ENCODE measurements at regions of chr5 and their contacts with region 1.

Region 1: DNA sequence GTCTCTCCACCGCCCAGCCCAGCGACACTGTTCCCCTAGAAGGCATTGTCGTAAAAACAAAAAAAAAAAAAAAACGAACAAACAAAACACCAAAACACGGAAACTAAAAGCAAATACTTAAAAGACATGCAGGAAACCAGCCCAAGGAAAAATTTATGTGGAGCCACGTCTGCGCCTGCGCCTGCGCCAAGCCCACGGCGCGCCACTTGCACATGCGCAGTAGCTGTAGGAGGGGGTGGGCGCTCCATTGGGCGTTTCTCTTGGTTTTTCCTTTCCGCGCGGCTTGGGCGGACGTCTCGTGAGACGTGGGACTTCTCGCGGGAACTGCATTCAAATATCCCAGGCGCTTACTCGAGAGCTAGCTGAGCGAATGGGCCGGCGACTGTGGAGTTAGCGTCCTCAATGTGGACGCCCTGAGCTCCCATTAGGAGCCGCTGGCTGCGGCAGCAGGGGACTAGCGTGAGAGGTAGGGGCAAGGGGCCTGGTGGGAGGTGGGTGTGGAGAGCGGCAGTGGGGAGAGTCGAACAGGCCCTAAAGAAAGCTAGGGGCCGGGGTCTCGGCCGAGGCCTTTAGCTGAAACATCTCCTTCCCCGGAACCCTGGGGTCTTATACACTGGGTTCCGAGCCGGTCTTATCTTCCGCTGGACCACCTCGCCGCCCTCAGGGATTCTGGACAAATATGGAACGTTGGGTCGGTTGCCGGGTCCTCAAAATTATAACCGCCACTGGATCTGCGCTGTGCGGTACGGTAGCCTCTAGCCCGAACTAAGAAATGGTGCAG is at the start of gene SPDL1:
- DNase-seq: peak; percentile 95
- ATAC-seq: peak; percentile 96 to 98
- total RNA-seq, gene SPDL1: 4.4 to 4.9 TPM

Region 2: GRCh38 chr5:168679515-168679920 is 904.1 kb before region 1 on chr5:
- intact Hi-C with region 1: loop called in 1 of 2 experiments (anchors 10 kb)
- DNase-seq: peak; percentile 83
- ATAC-seq: peak; percentile 55 to 64

Region 3: DNA sequence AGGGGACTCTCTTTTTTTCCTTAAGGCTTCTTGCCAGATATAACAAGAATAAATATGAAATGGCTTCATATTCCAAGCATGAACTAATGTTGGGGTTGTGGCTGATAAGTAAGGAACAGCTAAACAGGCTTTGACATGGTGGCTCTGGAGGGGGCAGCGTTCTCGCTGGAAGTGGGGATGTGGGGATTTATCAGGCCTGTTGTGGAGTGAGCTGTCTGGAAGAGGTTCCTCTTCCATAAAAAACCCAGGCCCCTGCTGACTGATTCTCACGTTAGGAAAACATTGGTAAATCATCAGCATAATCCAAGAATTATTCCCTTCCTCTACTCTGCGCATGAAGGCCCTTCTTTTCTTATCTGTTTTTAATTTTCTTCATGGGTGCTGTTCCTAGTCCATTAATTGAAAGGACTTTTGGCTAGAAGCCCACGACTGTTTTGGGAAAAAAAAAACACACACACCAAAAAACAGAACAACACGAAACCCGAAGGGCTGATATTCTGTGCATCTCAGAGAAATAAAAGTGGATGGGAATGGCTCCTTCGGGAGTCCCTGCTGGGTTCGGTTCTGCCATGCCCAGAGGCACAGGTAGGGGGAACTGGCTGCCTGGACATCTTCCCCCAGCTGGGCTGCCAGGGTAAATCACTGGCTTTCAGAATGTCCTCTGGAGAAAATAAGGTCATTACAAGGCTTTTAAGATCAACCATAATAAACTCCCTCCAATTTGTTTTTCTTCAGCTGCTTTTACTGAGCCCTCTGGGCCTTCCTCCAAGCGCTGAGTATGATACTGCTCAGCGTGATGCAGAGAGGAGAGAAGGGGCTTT is 579.7 kb before region 1 on chr5:
- intact Hi-C with region 1: loop called in 1 of 2 experiments (anchors 10 kb)
- DNase-seq: no peak
- ATAC-seq: peak; percentile 11 to 73

Region 4: DNA sequence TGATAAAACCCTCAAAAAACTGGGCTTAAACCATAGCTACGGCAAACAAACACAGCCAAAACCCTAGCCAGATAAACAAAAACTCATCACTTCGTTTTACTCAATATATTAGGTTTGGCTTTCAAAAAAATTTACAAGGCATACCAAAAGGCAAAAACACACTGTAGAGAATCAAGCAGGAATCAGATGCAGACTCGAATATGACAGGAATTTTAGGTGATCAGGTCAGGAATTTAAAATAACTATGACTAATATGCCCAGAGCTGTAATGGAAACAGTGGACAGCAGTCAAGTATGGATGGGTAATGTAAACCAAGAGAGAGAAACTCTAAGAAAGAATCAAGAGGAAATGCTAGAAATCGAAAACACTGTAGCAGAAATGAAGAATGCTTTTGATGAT is 27.0 kb after region 1 on chr5:
- intact Hi-C with region 1: no loop called
- DNase-seq: no peak
- ATAC-seq: no peak

Region 5: GRCh38 chr5:169886033-169886432 is 302.4 kb after region 1 on chr5:
- intact Hi-C with region 1: no loop called
- DNase-seq: no peak
- ATAC-seq: no peak

Measured in left cardiac atrium (tissue), 4 donors.